H1 (cell line): ENCODE measurements at regions of chr13 and their contacts with region 1.

Region 1: GRCh38 chr13:49300739-49301589 is 53.2 kb downstream of the CDADC1 start:
- DNase-seq: peak in 1 of 2 experiments; percentile 57
- H3K4me3 ChIP-seq: no peak overlapping the region
- H3K27ac ChIP-seq: no peak overlapping the region
- H3K4me1 ChIP-seq: peaks cover 0 to 2% (median 0%) of the 10 kb centered on the region in 4 experiments; a peak in 2 of 7 replicates
- H3K27me3 ChIP-seq: peaks cover 0 to 2% (median 0%) of the 10 kb centered on the region in 4 experiments; a peak in 1 of 7 replicates
- CTCF ChIP-seq: peak in 2 of 3 experiments; percentile 79 to 86; a peak in 3 of 4 replicates
- EP300 ChIP-seq: no peak
- POLR2A ChIP-seq: no peak
- RAD21 ChIP-seq: peak; percentile 95 to 96

Region 2: GRCh38 chr13:49287995-49288394 is 13.0 kb before region 1 on chr13:
- CTCF ChIA-PET with region 1: interaction called, 11 read pairs
- POLR2A ChIA-PET with region 1: no interaction called
- DNase-seq: no peak
- H3K4me3 ChIP-seq: no peak overlapping the region
- H3K27ac ChIP-seq: no peak overlapping the region
- H3K4me1 ChIP-seq: no peaks in the 10 kb centered on the region
- H3K27me3 ChIP-seq: no peaks in the 10 kb centered on the region
- CTCF ChIP-seq: no peak
- EP300 ChIP-seq: no peak
- POLR2A ChIP-seq: no peak
- RAD21 ChIP-seq: no peak

Region 3: DNA sequence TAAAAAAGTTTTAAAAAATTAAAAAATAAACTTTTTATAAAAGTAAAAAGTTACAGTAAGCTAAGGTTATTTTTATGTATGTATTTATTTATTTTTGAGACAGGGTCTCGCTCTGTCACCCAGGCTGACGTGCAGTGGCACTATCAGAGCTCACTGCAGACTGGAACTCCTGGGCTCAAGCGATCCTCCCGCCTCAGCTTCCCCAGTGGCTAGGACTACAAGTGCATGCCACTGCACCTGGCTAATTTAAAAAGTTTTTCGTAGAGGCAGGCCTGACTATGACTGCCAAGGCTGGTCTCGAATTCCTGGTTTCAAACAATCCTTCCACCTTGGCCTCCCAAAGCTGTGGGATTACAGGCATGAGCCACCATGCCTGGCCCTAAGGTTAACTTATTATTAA is 10.9 kb after region 1 on chr13:
- CTCF ChIA-PET with region 1: interaction called, 14 read pairs
- POLR2A ChIA-PET with region 1: no interaction called
- DNase-seq: no peak
- H3K4me3 ChIP-seq: no peak overlapping the region
- H3K27ac ChIP-seq: no peak overlapping the region
- H3K4me1 ChIP-seq: 0 out of 7 replicates have a peak, but pooled peaks cover 0 to 2% (median 0%) of the 10 kb centered on the region in 4 experiments
- H3K27me3 ChIP-seq: no peaks in the 10 kb centered on the region
- CTCF ChIP-seq: no peak
- EP300 ChIP-seq: no peak
- POLR2A ChIP-seq: no peak
- RAD21 ChIP-seq: no peak